ENCODE measurements at regions of chr1 and their contacts with region 1.

Region 1: DNA sequence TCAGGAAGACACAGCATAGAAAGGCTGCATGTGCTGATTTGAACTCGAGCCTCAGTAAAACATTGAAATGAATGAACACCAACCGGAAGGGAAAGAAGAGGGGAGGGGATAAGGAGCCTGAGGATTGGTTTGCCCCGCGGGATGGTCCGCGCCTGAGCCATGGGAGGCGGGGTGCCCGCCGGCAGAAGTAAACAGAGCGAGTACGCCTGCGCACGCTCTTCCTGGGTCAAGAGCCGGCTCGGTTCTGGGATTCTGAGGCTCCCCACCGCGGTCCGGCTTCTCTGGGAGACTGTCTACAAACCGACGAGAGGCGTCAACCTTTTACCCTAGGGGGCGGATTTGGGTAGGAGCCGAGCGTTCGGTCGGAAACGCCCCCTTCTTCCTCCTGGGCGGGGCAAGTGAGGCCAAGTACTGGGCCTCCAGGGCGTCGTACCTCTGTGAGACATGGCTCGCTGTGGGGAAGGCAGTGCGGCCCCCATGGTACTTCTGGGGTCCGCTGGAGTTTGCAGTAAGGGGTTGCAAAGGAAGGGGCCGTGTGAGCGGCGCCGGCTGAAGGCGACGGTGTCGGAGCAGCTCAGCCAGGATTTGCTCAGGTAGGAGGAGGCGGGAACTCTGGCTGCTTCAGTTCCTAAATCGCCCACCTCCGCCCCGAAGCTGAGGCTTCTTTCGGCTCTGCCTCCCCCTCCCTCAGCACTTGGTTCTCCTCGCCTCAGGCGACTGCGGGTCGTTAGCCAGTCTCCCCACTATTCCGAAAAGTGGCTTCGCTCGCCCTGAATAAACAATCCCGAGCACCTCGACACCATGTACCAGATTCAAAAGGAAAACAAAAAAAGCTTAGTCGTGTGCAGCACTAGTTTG is at the start of gene BTBD8:
- DNase-seq: peak; percentile 73 to 74
- H3K4me3 ChIP-seq: peak within 1 kb of the TSS; percentile 67 to 82 (median 71)
- H3K27ac ChIP-seq: peak within 1 kb of the TSS; percentile 79 to 89
- H3K4me1 ChIP-seq: no peaks in the 10 kb centered on the region
- H3K27me3 ChIP-seq: no peaks in the 10 kb centered on the region
- CTCF ChIP-seq: no peak
- POLR2A ChIP-seq: peak; percentile 14
- total RNA-seq, gene BTBD8: 7.2 to 12.6 (median 7.5) TPM

Region 2: DNA sequence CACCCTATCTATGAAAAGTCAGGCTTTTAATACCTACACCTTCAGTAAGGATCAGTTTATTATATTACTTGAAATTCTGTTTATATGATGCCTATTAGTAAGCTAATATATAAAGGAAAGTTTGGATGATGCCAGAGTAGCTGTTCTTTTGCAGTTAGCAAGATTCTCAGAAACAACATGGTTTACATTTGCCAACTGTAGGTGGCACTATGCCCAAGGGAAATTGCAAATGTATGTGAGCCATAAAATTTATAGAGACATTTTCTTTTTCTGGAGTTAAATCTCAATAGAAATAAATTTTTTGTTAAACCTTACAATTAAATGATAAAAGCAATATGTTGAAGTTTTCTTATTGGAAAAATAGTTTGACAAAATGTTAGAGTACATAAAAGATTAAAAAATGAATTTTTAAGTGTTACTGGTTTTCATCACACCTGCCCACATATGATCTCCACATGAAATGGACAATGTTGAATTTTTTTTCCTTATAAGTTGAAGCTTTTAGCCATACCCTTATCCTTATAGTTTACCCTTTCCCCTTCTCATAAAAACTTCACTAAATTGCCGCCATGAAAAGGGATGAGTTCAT is 82.7 kb before region 1 on chr1:
- intact Hi-C with region 1: loop called (anchors 5 kb)
- DNase-seq: no peak
- H3K4me3 ChIP-seq: no peak overlapping the region
- H3K27ac ChIP-seq: no peak overlapping the region
- H3K4me1 ChIP-seq: no peaks in the 10 kb centered on the region
- H3K27me3 ChIP-seq: no peaks in the 10 kb centered on the region
- CTCF ChIP-seq: peak in 1 of 3 donors; percentile 34
- POLR2A ChIP-seq: no peak